ENCODE measurements at regions of chr3 and their contacts with region 1.

Region 1: DNA sequence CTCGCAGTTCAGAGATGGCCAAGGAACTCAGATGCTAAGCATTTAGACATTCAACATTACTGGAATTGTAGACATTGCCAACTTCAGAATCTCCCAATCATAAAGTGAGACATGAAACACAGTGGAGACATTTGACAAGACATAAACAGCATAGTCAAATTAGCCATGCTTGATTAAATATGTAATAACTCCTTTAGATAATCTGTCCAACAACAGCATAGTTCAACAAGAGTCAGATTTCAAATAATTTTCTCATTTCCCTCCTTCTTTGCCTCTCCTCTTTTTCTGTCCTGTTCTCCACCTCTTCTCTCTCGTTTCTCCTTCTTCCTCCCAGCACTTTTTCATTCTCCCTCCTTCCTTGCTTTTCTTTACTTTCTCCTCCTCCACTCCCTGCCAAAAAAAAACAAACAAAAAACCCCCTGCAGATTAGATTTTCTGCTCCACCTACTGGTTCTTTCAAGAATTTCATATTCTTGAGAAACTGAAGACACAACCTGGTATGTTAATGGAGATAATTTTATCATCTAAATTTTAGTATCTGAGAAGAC is 20.2 kb downstream of the CPOX start:
- DNase-seq: peak in 4 of 5 donors; percentile 41 to 55 (median 50)
- H3K4me3 ChIP-seq: no peak overlapping the region
- H3K4me3 Mint-ChIP-seq: peak overlapping the region in 7 of 8 donors; percentile 7 to 70 (median 59)
- H3K27ac ChIP-seq: no peak overlapping the region
- H3K27ac Mint-ChIP-seq: peak overlapping the region; percentile 11 to 96 (median 88)
- H3K4me1 ChIP-seq: peaks cover 21% of the 10 kb centered on the region
- H3K4me1 Mint-ChIP-seq: peaks cover 22 to 47% (median 37%) of the 10 kb centered on the region in 4 donors
- H3K27me3 ChIP-seq: no peaks in the 10 kb centered on the region
- H3K27me3 Mint-ChIP-seq: no peaks in the 10 kb centered on the region

Region 2: GRCh38 chr3:97940034-97940433 is 633.2 kb before region 1 on chr3:
- CTCF ChIA-PET with region 1: no interaction called
- POLR2A ChIA-PET with region 1: no interaction called
- intact Hi-C with region 1: no loop called
- DNase-seq: peak in 4 of 5 donors; percentile 28 to 33 (median 32)
- H3K4me3 ChIP-seq: no peak overlapping the region
- H3K4me3 Mint-ChIP-seq: no peak overlapping the region
- H3K27ac ChIP-seq: no peak overlapping the region
- H3K27ac Mint-ChIP-seq: peak overlapping the region in 3 of 7 donors; percentile 38 to 65 (median 39)
- H3K4me1 ChIP-seq: no peaks in the 10 kb centered on the region
- H3K4me1 Mint-ChIP-seq: peaks cover 0 to 4% (median 2%) of the 10 kb centered on the region in 4 donors
- H3K27me3 ChIP-seq: no peaks in the 10 kb centered on the region
- H3K27me3 Mint-ChIP-seq: no peaks in the 10 kb centered on the region

Region 3: GRCh38 chr3:98188545-98188944 is 384.7 kb before region 1 on chr3:
- CTCF ChIA-PET with region 1: interaction called, 3 read pairs
- POLR2A ChIA-PET with region 1: no interaction called
- intact Hi-C with region 1: loop called (anchors 1 kb)
- DNase-seq: peak in 4 of 5 donors; percentile 15 to 26 (median 17)
- H3K4me3 ChIP-seq: no peak overlapping the region
- H3K4me3 Mint-ChIP-seq: peak overlapping the region in 1 of 8 donors; percentile 37
- H3K27ac ChIP-seq: no peak overlapping the region
- H3K27ac Mint-ChIP-seq: peak overlapping the region in 2 of 7 donors; percentile 25 to 44
- H3K4me1 ChIP-seq: no peaks in the 10 kb centered on the region
- H3K4me1 Mint-ChIP-seq: peaks cover 0 to 7% (median 2%) of the 10 kb centered on the region in 4 donors
- H3K27me3 ChIP-seq: no peaks in the 10 kb centered on the region
- H3K27me3 Mint-ChIP-seq: peaks cover 3 to 7% of the 10 kb centered on the region in 2 donors

Region 4: GRCh38 chr3:98343647-98344507 is 229.4 kb before region 1 on chr3:
- CTCF ChIA-PET with region 1: interaction called, 16 read pairs
- POLR2A ChIA-PET with region 1: no interaction called
- intact Hi-C with region 1: loop called (anchors 1 kb)
- DNase-seq: peak; percentile 33 to 50 (median 40)
- H3K4me3 ChIP-seq: no peak overlapping the region
- H3K4me3 Mint-ChIP-seq: no peak overlapping the region
- H3K27ac ChIP-seq: no peak overlapping the region
- H3K27ac Mint-ChIP-seq: no peak overlapping the region
- H3K4me1 ChIP-seq: no peaks in the 10 kb centered on the region
- H3K4me1 Mint-ChIP-seq: peaks cover 0 to 7% (median 4%) of the 10 kb centered on the region in 4 donors
- H3K27me3 ChIP-seq: no peaks in the 10 kb centered on the region
- H3K27me3 Mint-ChIP-seq: peaks cover 0 to 2% of the 10 kb centered on the region in 2 donors

Region 5: DNA sequence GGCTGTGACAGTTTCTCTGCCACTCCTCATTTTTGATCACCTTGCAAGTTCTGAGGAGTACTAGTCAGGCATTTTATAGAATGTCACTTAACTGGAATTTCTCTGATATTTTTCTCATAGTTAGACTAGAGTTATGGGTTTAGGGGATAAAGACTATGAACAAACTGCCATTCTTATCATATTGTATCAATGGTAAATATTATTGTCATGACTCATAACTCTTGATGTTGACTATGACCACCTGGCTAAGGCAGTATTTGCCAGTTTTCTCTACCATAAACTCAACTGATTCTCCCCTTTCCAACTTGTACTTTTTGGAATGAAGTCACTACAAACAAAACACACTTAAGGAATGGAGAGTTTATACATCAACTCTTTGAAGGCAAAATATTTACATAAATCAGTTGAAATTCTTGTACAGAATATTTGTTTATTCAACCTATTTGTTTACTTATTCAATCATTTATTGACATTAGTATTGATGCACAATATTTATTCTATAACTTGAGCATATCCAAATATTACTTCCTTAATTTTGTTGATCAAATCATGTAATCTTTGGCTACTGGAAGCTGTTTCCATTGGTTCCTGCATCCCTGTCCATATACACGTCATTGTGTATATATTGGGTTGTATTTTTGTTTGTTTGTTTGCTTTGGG is 132.8 kb before region 1 on chr3:
- CTCF ChIA-PET with region 1: no interaction called
- POLR2A ChIA-PET with region 1: no interaction called
- intact Hi-C with region 1: loop called (anchors 5 kb)
- DNase-seq: no peak
- H3K4me3 ChIP-seq: no peak overlapping the region
- H3K4me3 Mint-ChIP-seq: no peak overlapping the region
- H3K27ac ChIP-seq: no peak overlapping the region
- H3K27ac Mint-ChIP-seq: no peak overlapping the region
- H3K4me1 ChIP-seq: no peaks in the 10 kb centered on the region
- H3K4me1 Mint-ChIP-seq: no peaks in the 10 kb centered on the region
- H3K27me3 ChIP-seq: no peaks in the 10 kb centered on the region
- H3K27me3 Mint-ChIP-seq: no peaks in the 10 kb centered on the region

Region 6: DNA sequence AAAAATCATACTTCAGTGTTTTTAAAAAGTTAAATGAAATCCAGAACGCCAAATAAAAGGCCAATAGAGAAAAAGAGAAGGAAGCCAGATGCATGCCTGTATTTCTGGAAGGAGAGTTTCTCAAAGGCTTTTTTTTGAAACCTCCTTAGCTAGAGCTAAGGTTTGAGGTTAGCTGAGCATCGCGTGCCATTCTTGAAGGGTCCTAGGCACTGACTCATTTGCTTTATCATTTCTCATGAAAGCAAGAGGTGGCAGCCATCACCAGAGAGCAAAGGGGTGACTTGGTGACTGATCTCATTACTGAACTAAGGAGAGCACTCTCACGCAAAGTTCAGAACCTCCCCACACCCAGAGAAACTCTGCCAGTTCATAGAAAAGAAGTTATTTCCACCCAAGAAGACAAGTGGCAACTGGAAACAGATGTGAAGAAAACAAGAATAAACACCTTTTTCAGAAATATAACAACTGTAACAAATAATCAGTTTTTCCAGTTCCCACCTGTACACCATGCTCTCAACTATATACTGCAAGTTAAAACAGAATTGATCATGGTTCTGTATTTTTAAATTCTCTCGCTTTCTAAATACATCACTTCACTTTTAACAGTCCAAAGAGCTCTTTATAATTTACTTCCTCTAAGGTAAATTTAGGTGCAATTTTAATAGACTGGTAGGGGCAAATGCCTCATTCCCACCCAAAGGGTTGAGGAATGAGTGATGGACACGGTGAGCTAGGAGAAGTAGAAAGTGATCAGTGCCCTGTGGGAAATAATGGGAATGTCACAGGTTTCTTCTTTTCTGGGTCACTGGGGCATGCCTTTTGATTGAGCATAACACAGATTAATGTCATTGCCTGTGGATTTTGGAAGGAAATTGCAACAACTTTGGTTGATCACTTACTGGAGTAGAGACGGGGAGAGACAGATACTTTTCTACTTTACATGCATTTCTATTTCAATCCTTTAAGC is 16.8 kb before region 1 on chr3:
- CTCF ChIA-PET with region 1: interaction called, 52 read pairs
- POLR2A ChIA-PET with region 1: interaction called, 225 read pairs
- intact Hi-C with region 1: loop called (anchors 1 kb)
- DNase-seq: peak; percentile 43 to 90 (median 54)
- H3K4me3 ChIP-seq: peak overlapping the region in 1 of 2 donors; percentile 0
- H3K4me3 Mint-ChIP-seq: peak overlapping the region; percentile 72 to 89 (median 80)
- H3K27ac ChIP-seq: peak overlapping the region; percentile 73
- H3K27ac Mint-ChIP-seq: peak overlapping the region; percentile 94 to 99 (median 97)
- H3K4me1 ChIP-seq: peaks cover 86% of the 10 kb centered on the region
- H3K4me1 Mint-ChIP-seq: peaks cover 56 to 89% (median 76%) of the 10 kb centered on the region in 4 donors
- H3K27me3 ChIP-seq: no peaks in the 10 kb centered on the region
- H3K27me3 Mint-ChIP-seq: no peaks in the 10 kb centered on the region

Region 7: GRCh38 chr3:98855806-98856400 is 282.6 kb after region 1 on chr3:
- CTCF ChIA-PET with region 1: no interaction called
- POLR2A ChIA-PET with region 1: no interaction called
- intact Hi-C with region 1: no loop called
- DNase-seq: no peak
- H3K4me3 ChIP-seq: no peak overlapping the region
- H3K4me3 Mint-ChIP-seq: no peak overlapping the region
- H3K27ac ChIP-seq: no peak overlapping the region
- H3K27ac Mint-ChIP-seq: no peak overlapping the region
- H3K4me1 ChIP-seq: no peaks in the 10 kb centered on the region
- H3K4me1 Mint-ChIP-seq: no peaks in the 10 kb centered on the region
- H3K27me3 ChIP-seq: no peaks in the 10 kb centered on the region
- H3K27me3 Mint-ChIP-seq: no peaks in the 10 kb centered on the region

Measured in CD4-positive, alpha-beta memory T cell (primary cell).